ENCODE measurements at regions of chr7 and their contacts with region 1.

Region 1: DNA sequence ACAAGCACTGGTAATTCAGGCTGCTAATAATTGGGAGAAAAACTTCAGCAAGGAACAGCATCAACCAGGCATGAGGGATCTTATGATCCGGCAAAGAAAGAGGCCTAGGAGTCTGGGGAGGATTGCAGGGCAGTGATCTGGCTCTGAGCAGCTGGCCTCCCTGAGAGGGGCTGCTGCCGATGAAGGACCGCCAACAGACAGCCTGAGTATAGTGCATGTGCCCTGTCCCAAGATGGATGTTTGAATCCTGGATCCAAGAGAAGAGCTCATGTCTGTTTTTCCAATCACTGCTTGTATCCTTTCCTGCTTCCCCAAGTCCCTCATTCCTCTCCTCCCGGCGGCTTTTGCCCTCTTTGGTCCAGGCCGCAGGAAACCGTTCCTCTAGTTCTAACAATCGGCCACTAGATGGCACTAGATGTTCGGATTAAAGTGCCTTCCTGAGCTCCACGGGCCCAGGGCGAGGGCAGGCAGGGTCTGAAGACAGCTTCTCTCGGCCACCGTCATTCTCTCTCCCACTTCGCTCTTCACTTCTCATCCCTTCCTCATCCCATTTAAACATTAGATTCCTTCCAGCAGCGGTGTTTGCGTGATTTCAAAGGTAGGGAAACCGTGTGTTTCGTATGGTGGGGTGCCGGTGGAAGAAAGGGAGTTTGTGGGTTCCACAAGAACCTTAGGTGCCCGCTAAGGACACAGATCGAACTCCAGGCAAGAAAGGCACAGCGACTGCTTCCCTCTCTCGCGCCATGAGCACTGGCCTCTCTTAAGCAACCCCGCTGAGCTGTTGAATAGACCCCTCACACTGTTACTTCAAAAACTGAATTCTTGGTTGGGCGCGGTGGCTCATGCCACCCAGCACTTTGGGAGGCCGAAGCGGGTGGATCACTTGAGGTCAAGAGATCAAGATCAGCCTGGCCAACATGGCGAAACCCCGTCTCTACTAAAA is 82.4 kb downstream of the ADCYAP1R1 start:
- DNase-seq: peak; percentile 84
- H3K4me3 Mint-ChIP-seq: no peak overlapping the region
- H3K27ac Mint-ChIP-seq: no peak overlapping the region
- H3K4me1 Mint-ChIP-seq: no peaks in the 10 kb centered on the region
- H3K27me3 Mint-ChIP-seq: peaks cover 26% of the 10 kb centered on the region
- CTCF ChIP-seq: peak; percentile 77

Region 2: DNA sequence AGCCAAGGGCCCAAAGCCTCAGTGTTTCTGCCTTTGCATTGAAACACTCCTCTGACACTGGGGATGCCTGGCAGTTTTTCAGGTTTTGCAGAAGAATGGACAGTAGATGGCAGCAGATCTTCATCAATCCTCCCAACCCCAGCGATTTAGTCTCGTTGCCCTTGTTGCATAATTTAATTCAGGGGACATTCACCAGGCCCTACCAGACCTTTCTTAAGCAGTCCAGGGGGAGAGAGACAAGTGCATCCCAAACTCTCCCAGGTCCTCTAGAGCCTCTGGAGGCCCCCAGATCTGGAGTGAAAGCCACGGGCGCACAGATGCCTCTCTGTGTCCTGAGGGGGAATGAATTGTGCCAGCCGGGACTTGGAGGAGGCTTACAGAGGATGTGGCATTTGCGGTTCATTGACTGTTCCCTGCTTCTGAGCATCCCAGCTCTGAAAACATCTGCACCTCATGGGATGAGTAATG is 333.7 kb before region 1 on chr7:
- CTCF ChIA-PET with region 1: interaction called, 11 read pairs
- POLR2A ChIA-PET with region 1: no interaction called
- intact Hi-C with region 1: no loop called
- DNase-seq: peak; percentile 80
- H3K4me3 Mint-ChIP-seq: no peak overlapping the region
- H3K27ac Mint-ChIP-seq: no peak overlapping the region
- H3K4me1 Mint-ChIP-seq: peaks cover 43% of the 10 kb centered on the region
- H3K27me3 Mint-ChIP-seq: no peaks in the 10 kb centered on the region
- CTCF ChIP-seq: peak; percentile 80

Region 3: DNA sequence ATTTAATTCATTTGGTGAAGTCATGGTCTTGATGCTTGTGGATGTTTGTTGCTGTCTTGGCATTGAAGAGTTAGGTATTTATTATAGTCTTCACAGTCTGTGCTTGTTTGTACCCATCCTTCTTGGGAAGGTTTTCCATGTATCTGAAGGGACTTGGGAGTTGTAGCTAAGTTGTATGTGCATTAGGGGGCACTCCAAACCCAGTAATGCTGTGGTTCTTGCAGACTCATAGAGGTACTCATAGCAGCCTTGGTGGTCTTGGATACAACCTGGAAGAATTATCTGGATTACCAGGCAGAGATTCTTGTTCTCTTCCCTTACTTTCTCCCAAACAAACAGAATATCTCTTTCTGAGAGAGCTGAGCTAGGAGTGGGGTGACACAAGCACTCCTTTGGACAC is 10.8 kb after region 1 on chr7:
- CTCF ChIA-PET with region 1: interaction called, 20 read pairs
- POLR2A ChIA-PET with region 1: no interaction called
- intact Hi-C with region 1: no loop called
- DNase-seq: no peak
- H3K4me3 Mint-ChIP-seq: no peak overlapping the region
- H3K27ac Mint-ChIP-seq: no peak overlapping the region
- H3K4me1 Mint-ChIP-seq: no peaks in the 10 kb centered on the region
- H3K27me3 Mint-ChIP-seq: peaks cover 53% of the 10 kb centered on the region
- CTCF ChIP-seq: no peak

Region 4: GRCh38 chr7:31373337-31374289 is 239.1 kb after region 1 on chr7:
- CTCF ChIA-PET with region 1: interaction called, 26 read pairs
- POLR2A ChIA-PET with region 1: no interaction called
- intact Hi-C with region 1: loop called (anchors 5 kb)
- DNase-seq: peak; percentile 62
- H3K4me3 Mint-ChIP-seq: no peak overlapping the region
- H3K27ac Mint-ChIP-seq: no peak overlapping the region
- H3K4me1 Mint-ChIP-seq: no peaks in the 10 kb centered on the region
- H3K27me3 Mint-ChIP-seq: peaks cover 19% of the 10 kb centered on the region
- CTCF ChIP-seq: peak; percentile 82

Region 5: DNA sequence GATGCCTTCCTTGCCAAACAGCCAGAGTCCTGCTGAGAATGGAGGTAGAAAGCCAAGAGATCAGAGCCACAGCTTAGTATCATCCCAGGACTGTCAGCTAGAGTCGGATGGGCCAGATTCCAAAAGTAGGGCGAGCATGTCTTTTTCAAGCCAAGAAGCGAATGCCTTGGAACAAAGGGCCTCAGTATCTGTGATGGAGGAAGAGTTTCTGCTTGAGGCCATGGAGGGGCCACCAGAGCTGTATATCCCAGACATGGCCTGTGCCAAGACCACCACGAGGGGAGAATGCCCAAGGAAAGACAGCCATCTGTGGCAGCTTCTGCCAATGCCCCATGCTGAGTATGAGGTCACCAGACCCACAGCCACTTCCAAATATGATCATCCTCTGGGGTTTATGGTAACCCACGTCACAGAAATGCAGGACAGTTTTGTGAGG is 508.2 kb after region 1 on chr7:
- CTCF ChIA-PET with region 1: interaction called, 10 read pairs
- POLR2A ChIA-PET with region 1: no interaction called
- intact Hi-C with region 1: no loop called
- DNase-seq: no peak
- H3K4me3 Mint-ChIP-seq: no peak overlapping the region
- H3K27ac Mint-ChIP-seq: no peak overlapping the region
- H3K4me1 Mint-ChIP-seq: no peaks in the 10 kb centered on the region
- H3K27me3 Mint-ChIP-seq: peaks cover 15% of the 10 kb centered on the region
- CTCF ChIP-seq: no peak

Region 6: GRCh38 chr7:32204361-32205018 is 1070.0 kb after region 1 on chr7:
- CTCF ChIA-PET with region 1: interaction called, 30 read pairs
- POLR2A ChIA-PET with region 1: no interaction called
- intact Hi-C with region 1: no loop called
- DNase-seq: peak; percentile 87
- H3K4me3 Mint-ChIP-seq: peak overlapping the region; percentile 38
- H3K27ac Mint-ChIP-seq: no peak overlapping the region
- H3K4me1 Mint-ChIP-seq: no peaks in the 10 kb centered on the region
- H3K27me3 Mint-ChIP-seq: peaks cover 10% of the 10 kb centered on the region
- CTCF ChIP-seq: peak; percentile 92